ENCODE measurements at regions of chr17 and their contacts with region 1.

Region 1: GRCh38 chr17:48024937-48025906 is 12.4 kb downstream of the COPZ2 start:
- DNase-seq: peak; percentile 97
- H3K4me3 ChIP-seq: peak overlapping the region; percentile 50 to 78
- H3K27ac ChIP-seq: peak overlapping the region; percentile 43 to 68
- H3K4me1 ChIP-seq: peaks cover 25 to 33% of the 10 kb centered on the region in 2 experiments; a peak in 3 of 4 replicates
- H3K27me3 ChIP-seq: no peaks in the 10 kb centered on the region
- CTCF ChIP-seq: peak; percentile 90
- EP300 ChIP-seq: no peak
- RAD21 ChIP-seq: peak; percentile 98

Region 2: DNA sequence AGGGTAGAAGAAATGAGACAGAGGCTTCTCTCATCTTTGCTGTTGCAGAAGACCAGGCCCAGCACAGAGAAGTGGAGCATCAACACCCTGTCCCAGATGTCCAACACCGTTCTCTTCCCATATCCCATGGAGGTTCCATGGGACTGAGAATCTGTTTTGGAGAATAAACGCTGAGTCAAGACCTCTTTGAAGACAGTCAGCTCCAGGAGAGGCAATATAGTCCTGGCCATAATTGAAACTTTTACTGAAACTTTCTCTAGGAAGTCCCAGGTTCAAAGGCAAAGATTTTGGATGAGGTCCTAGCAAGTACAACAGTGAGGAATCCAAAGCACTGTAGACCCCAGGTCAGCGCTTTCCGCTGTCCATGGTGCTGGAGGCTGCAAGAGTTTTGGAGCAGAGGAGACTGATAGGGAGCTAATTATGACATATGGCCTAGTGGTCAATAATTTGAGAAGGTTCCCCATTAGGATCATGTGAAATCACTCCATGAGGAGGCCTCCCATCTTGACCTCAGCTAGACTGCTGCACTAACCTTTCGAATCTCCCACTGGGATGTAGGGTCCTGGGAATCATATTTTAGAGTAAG is 239.6 kb before region 1 on chr17:
- CTCF ChIA-PET with region 1: no interaction called
- POLR2A ChIA-PET with region 1: no interaction called
- DNase-seq: no peak
- H3K4me3 ChIP-seq: no peak overlapping the region
- H3K27ac ChIP-seq: no peak overlapping the region
- H3K4me1 ChIP-seq: peaks cover 0 to 8% of the 10 kb centered on the region in 2 experiments; a peak in 1 of 4 replicates
- H3K27me3 ChIP-seq: peaks cover 60% of the 10 kb centered on the region
- CTCF ChIP-seq: no peak
- EP300 ChIP-seq: no peak
- RAD21 ChIP-seq: no peak

Region 3: DNA sequence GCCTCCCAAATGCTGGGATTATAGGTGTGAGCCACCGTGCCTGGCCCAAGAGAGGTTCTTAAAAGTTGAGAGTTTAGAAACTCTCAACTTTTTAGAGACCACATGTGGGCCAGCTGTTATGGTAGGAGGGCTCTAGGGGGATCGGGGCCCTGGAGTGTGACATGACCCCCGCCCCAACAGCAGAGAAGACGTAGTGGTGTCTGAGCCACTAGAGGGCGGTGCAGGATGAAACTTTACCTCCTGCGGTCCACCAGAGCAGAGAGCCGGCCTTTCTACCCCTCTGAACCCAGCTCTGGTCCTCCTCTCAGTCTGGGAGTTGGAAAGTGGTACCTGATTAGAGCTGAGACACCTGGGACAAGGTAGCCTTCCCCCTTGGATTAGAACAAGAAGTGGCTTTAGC is 46.9 kb before region 1 on chr17:
- CTCF ChIA-PET with region 1: interaction called, 1,752 read pairs
- POLR2A ChIA-PET with region 1: interaction called, 4 read pairs
- DNase-seq: peak; percentile 95
- H3K4me3 ChIP-seq: no peak overlapping the region; a peak in 1 of 4 replicates
- H3K27ac ChIP-seq: peak overlapping the region in 1 of 2 experiments; percentile 98; a peak in 2 of 4 replicates
- H3K4me1 ChIP-seq: peaks cover 0 to 49% of the 10 kb centered on the region in 2 experiments; a peak in 2 of 4 replicates
- H3K27me3 ChIP-seq: no peaks in the 10 kb centered on the region
- CTCF ChIP-seq: peak; percentile 99
- EP300 ChIP-seq: no peak
- RAD21 ChIP-seq: peak; percentile 99

Region 4: GRCh38 chr17:48084932-48085444 is 59.8 kb after region 1 on chr17:
- CTCF ChIA-PET with region 1: interaction called, 1,200 read pairs
- POLR2A ChIA-PET with region 1: interaction called, 3 read pairs
- DNase-seq: no peak
- H3K4me3 ChIP-seq: no peak overlapping the region
- H3K27ac ChIP-seq: no peak overlapping the region
- H3K4me1 ChIP-seq: peaks cover 4 to 9% of the 10 kb centered on the region in 2 experiments; a peak in 2 of 4 replicates
- H3K27me3 ChIP-seq: no peaks in the 10 kb centered on the region
- CTCF ChIP-seq: no peak
- EP300 ChIP-seq: no peak
- RAD21 ChIP-seq: no peak

Region 5: DNA sequence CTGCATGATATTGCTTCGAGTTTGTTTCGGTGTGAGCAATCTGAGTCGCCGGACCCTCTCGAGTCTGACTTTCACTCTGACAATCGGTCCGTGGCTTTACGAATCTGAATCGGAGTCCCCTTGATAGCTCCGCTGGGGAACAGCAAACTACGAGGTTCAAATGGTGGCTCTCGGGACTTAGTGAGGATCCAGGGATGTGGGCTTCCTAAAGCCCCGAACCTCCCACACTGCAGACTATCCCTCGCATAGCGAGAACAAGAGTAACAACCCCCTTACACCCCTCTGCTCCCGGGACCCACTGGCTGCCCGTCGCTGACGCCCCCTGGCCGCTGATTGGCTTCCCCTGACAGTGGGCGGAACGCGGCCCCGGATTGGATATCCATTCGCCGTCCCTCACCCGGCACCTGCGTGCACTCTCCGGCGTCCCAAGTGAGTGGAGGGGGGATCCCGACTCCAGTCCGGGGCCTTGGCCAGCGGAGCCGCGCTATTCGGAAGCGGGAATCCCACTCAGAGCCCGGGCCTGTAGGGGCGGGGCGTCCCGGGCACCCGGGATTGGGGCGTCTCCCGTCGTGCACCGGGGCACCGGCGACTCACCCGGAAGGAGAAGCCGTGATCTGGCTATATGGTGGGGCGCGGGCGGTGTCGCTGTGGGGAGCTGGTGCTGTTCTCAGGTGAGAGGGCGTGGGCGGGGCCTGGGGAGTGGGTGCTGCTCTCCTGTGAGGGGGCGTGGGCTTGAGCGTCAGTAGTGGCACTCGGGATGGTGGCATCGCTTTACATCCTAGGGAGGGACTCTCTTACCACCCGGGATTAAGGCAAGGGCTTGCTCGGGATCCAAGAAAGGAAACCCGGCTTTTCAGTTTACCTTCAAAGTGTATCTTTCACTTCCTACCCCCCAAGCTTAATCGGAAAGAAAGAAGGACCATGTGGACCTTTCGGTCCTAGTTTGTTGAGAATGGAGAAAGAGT is 82.2 kb after region 1 on chr17 and contains the start of gene SNX11:
- CTCF ChIA-PET with region 1: interaction called, 46 read pairs
- POLR2A ChIA-PET with region 1: no interaction called
- DNase-seq: peak; percentile 98
- H3K4me3 ChIP-seq: peak within 1 kb of the TSS; percentile 70 to 89
- H3K27ac ChIP-seq: peak within 1 kb of the TSS; percentile 76 to 92
- H3K4me1 ChIP-seq: peaks cover 4 to 7% of the 10 kb centered on the region in 2 experiments; a peak in 3 of 4 replicates
- H3K27me3 ChIP-seq: no peaks in the 10 kb centered on the region
- CTCF ChIP-seq: peak; percentile 21; the same call in 1 of the 2 replicates
- EP300 ChIP-seq: no peak
- RAD21 ChIP-seq: no peak
- polyA plus RNA-seq, gene SNX11: 19.0 and 31.6 TPM in 2 replicates

Region 6: DNA sequence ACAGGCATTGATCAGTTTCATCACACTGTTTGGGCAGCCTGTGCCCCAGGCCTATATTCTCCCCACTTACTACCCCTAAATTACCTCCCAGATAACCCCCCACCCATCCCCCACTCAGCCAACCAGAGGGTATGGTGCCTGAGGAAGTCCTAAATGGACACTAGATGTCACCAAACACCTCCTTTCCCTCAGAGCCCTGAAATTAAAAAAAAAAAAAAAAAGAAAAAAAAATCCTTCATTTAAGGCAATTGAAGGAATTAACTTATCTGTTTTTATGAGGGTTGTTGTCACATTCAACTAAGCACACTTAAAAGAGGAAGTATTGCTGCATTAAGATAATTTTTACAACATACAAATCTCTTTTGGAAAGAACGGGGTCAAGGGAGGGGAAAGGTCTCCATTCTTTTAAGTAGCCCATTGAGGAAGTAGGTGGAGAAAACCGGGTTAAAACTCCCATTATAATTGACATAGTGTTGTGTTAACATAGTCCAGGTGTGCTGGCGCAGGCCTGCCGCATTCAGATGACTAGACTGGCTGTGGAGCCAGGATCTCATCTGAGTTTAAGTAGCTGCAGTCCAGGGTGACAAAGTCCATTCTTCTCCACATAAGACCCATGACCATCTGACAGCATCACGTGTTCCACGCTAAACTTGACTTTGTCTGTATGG is 128.6 kb after region 1 on chr17:
- CTCF ChIA-PET with region 1: interaction called, 11 read pairs
- POLR2A ChIA-PET with region 1: no interaction called
- DNase-seq: peak; percentile 62
- H3K4me3 ChIP-seq: no peak overlapping the region
- H3K27ac ChIP-seq: no peak overlapping the region
- H3K4me1 ChIP-seq: peaks cover 4 to 6% of the 10 kb centered on the region in 2 experiments; a peak in 3 of 4 replicates
- H3K27me3 ChIP-seq: peaks cover 84% of the 10 kb centered on the region
- CTCF ChIP-seq: peak; percentile 74
- EP300 ChIP-seq: no peak
- RAD21 ChIP-seq: peak; percentile 72